MCF 10A (cell line): ENCODE measurements at regions of chr6 and their contacts with region 1.

Region 1: DNA sequence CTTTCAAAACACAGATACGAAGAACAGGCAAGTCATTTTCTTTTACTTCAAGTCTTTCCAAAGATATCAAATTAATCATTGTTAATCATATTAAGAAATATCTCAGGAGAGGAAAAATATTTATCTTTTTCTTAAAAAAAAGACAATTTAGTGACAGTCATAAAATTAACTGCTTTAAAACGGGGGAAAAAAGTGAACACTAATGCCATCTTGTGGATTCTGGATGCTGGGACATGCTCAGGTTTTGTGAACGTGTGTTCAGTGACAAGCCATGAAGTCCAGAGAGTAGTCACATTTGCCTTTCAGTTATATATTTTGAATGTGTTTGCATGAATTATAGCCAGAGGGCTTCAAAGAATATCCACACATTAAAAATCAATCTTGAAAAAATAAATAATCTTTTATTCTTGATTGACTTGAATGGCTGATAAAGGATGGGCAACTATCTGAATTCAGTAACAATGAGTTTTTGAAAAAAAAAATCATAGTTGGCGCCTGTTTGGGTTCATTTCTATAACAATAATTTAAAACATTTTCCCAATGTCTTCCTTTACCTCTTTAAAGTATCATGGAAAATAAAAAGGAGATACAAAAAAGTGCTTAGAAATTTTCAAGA is 74.7 kb upstream of the NOX3 start:
- DNase-seq: peak; percentile 56
- H3K4me3 Mint-ChIP-seq: no peak overlapping the region
- H3K27ac Mint-ChIP-seq: no peak overlapping the region
- H3K4me1 Mint-ChIP-seq: peaks cover 9% of the 10 kb centered on the region
- H3K27me3 Mint-ChIP-seq: no peaks in the 10 kb centered on the region
- CTCF ChIP-seq: peak; percentile 68

Region 2: GRCh38 chr6:155314092-155314772 is 216.1 kb before region 1 on chr6 and contains the start of gene TFB1M:
- CTCF ChIA-PET with region 1: interaction called, 13 read pairs
- POLR2A ChIA-PET with region 1: interaction called, 19 read pairs
- intact Hi-C with region 1: no loop called
- DNase-seq: peak; percentile 98
- H3K4me3 Mint-ChIP-seq: peak within 1 kb of the TSS; percentile 79
- H3K27ac Mint-ChIP-seq: peak within 1 kb of the TSS; percentile 97
- H3K4me1 Mint-ChIP-seq: peaks cover 8% of the 10 kb centered on the region
- H3K27me3 Mint-ChIP-seq: no peaks in the 10 kb centered on the region
- CTCF ChIP-seq: no peak
- total RNA-seq, gene TFB1M: 26.8 and 31.0 TPM in 2 replicates

Region 3: DNA sequence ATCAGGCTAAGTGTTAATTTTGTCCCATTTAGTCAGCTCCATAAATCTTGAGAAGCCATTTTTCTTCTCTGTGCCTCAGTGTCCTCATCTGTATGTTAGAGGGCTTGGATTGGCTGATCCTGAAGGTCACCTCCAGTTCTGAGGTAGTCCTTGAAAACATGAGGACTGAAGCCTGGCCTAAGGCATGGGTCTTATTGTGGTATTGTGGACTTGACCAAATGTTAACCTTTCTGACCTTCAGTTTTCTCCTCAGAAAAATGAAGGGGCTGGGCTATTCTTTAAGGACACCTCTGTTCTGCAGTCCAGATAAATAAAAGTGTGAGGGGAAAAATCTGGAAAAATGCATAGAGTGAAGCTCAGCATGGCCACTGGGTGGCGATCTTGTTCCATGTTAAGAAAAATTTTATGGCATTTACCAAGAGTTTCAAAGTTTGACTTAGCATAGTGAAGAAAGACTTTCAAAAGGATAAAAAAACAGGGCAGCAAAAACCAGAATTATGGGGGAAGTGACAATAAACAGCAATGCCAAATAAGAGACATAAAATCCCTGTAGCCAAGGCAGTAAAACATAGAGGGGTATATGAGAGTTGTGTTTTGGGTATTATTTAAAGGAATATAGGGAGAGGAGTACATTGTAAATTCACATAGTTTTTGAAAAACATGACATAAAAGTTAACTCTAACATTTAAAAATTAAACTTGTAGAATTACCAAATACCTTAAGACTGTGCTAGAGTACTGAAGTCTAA is 202.8 kb before region 1 on chr6:
- CTCF ChIA-PET with region 1: interaction called, 34 read pairs
- POLR2A ChIA-PET with region 1: interaction called, 3 read pairs
- intact Hi-C with region 1: loop called (anchors 1 kb)
- DNase-seq: peak; percentile 47
- H3K4me3 Mint-ChIP-seq: no peak overlapping the region
- H3K27ac Mint-ChIP-seq: no peak overlapping the region
- H3K4me1 Mint-ChIP-seq: peaks cover 6% of the 10 kb centered on the region
- H3K27me3 Mint-ChIP-seq: no peaks in the 10 kb centered on the region
- CTCF ChIP-seq: peak; percentile 74

Region 4: DNA sequence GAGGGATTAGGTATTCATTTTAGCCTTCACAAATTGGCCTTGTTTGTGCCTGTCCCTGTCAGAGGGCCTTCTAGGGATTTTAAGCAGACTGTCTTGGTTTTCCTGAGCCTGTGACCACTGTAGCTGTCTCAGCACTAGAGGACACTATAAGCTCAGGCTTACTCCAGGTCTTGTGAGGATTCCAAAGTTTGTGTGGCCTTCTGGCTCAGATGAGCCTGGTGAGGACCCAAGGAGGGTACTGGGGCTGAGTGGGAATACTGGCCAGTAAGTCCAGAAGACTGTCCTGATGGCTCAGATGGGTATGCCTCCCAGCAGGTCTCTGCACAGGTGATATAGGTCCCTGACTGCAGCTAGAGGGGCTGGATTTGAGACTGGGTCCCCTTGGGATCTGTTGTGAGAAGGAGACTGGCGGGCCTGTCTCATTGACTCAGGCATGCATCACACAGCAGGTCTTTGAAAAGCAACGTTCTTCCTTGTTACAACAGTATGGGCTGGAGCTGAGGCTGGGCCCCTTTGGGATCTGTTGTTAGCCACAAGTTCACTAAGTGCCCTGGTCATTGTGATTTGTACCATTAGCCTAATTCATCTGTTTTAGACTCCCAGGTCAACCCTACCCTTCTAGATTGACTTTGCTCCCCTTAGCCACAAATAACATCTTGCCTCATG is 189.7 kb before region 1 on chr6:
- CTCF ChIA-PET with region 1: no interaction called
- POLR2A ChIA-PET with region 1: no interaction called
- intact Hi-C with region 1: loop called (anchors 5 kb)
- DNase-seq: peak; percentile 18
- H3K4me3 Mint-ChIP-seq: no peak overlapping the region
- H3K27ac Mint-ChIP-seq: no peak overlapping the region
- H3K4me1 Mint-ChIP-seq: no peaks in the 10 kb centered on the region
- H3K27me3 Mint-ChIP-seq: no peaks in the 10 kb centered on the region
- CTCF ChIP-seq: peak; percentile 14

Region 5: GRCh38 chr6:155380666-155381332 is 149.5 kb before region 1 on chr6:
- CTCF ChIA-PET with region 1: no interaction called
- POLR2A ChIA-PET with region 1: no interaction called
- intact Hi-C with region 1: loop called (anchors 2 kb)
- DNase-seq: no peak
- H3K4me3 Mint-ChIP-seq: no peak overlapping the region
- H3K27ac Mint-ChIP-seq: no peak overlapping the region
- H3K4me1 Mint-ChIP-seq: peaks cover 4% of the 10 kb centered on the region
- H3K27me3 Mint-ChIP-seq: no peaks in the 10 kb centered on the region
- CTCF ChIP-seq: no peak

Region 6: GRCh38 chr6:155418017-155418761 is 112.1 kb before region 1 on chr6:
- CTCF ChIA-PET with region 1: no interaction called
- POLR2A ChIA-PET with region 1: no interaction called
- intact Hi-C with region 1: no loop called
- DNase-seq: peak; percentile 73
- H3K4me3 Mint-ChIP-seq: peak overlapping the region; percentile 47
- H3K27ac Mint-ChIP-seq: peak overlapping the region; percentile 18
- H3K4me1 Mint-ChIP-seq: peaks cover 18% of the 10 kb centered on the region
- H3K27me3 Mint-ChIP-seq: no peaks in the 10 kb centered on the region
- CTCF ChIP-seq: no peak

Region 7: GRCh38 chr6:155493694-155494143 is 36.6 kb before region 1 on chr6:
- CTCF ChIA-PET with region 1: no interaction called
- POLR2A ChIA-PET with region 1: interaction called, 14 read pairs
- intact Hi-C with region 1: no loop called
- DNase-seq: peak; percentile 95
- H3K4me3 Mint-ChIP-seq: no peak overlapping the region
- H3K27ac Mint-ChIP-seq: peak overlapping the region; percentile 64
- H3K4me1 Mint-ChIP-seq: peaks cover 22% of the 10 kb centered on the region
- H3K27me3 Mint-ChIP-seq: no peaks in the 10 kb centered on the region
- CTCF ChIP-seq: no peak